ENCODE measurements at regions of chr12 and their contacts with region 1.

Region 1: GRCh38 chr12:12319451-12320183 is 30.4 kb downstream of the MANSC1 start:
- DNase-seq: no peak
- H3K4me3 ChIP-seq: no peak overlapping the region
- H3K27ac ChIP-seq: no peak overlapping the region
- H3K4me1 ChIP-seq: no peaks in the 10 kb centered on the region
- H3K27me3 ChIP-seq: no peaks in the 10 kb centered on the region
- CTCF ChIP-seq: no peak

Region 2: DNA sequence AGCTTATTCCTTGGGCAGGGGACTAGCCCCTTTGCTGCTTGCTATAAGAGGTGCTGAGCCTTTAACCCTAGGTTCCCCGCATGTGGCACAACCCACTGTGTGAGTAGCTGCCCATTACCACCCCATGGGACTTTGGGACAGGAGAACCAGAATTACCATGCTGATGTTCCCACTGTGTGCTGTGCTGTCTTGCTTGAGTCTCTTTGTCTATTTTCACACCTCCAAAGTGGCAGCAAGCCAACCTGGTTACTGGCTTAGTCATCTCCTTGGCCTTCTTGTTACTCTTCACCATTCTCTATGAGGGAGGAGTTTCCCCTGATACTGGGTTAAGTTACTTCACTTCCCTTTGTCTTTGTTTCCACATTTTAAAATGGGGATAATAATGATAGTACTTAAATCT is 743.5 kb before region 1 on chr12:
- CTCF ChIA-PET with region 1: no interaction called
- dilution Hi-C with region 1: no loop called
- in situ Hi-C with region 1: no loop called
- intact Hi-C with region 1: no loop called
- DNase-seq: peak; percentile 94
- H3K4me3 ChIP-seq: no peak overlapping the region
- H3K27ac ChIP-seq: peak overlapping the region; percentile 53
- H3K4me1 ChIP-seq: peaks cover 29% of the 10 kb centered on the region
- H3K27me3 ChIP-seq: no peaks in the 10 kb centered on the region
- CTCF ChIP-seq: no peak

Region 3: DNA sequence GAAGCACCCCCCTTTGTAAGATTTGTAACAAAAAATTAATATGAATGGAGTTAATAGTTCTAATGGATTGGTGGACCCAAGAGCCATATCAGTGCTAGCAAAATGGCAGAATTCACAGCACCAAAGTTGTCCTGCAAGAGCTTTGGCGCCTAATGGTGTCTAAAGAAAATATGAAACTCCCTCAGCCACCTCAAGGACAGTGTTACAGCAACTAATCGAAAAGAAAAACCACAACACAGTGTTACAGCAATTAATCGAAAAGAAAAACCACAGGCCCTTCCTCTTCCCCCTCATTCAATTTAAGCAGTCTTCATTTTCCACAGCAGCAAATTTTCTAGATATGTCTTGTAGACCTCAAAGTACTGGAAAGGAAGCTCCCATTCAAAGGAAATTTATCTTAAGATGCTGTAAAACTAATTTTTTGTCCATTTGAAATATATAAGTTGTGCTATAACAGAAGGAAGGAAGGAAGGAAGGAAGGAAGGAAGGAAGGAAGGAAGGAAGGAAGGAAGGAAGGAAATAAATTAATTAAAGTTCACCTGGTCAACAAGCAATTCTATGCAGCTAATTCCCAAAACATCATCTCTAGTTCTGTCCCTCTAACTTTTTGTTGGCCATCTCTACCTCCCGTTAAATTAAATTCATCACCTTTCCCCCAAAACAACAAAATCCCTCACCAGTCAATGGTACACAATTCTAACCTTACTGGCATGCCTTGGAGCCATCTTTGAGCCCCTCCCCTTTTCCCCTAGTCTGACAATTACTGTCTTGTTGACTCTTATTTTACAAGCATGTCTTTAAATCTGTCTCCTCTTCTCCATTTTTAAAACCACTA is 70.2 kb before region 1 on chr12:
- CTCF ChIA-PET with region 1: no interaction called
- dilution Hi-C with region 1: no loop called
- in situ Hi-C with region 1: loop called in 1 of 2 experiments (anchors 10 kb)
- intact Hi-C with region 1: no loop called
- DNase-seq: no peak
- H3K4me3 ChIP-seq: no peak overlapping the region
- H3K27ac ChIP-seq: no peak overlapping the region
- H3K4me1 ChIP-seq: no peaks in the 10 kb centered on the region
- H3K27me3 ChIP-seq: no peaks in the 10 kb centered on the region
- CTCF ChIP-seq: no peak

Region 4: DNA sequence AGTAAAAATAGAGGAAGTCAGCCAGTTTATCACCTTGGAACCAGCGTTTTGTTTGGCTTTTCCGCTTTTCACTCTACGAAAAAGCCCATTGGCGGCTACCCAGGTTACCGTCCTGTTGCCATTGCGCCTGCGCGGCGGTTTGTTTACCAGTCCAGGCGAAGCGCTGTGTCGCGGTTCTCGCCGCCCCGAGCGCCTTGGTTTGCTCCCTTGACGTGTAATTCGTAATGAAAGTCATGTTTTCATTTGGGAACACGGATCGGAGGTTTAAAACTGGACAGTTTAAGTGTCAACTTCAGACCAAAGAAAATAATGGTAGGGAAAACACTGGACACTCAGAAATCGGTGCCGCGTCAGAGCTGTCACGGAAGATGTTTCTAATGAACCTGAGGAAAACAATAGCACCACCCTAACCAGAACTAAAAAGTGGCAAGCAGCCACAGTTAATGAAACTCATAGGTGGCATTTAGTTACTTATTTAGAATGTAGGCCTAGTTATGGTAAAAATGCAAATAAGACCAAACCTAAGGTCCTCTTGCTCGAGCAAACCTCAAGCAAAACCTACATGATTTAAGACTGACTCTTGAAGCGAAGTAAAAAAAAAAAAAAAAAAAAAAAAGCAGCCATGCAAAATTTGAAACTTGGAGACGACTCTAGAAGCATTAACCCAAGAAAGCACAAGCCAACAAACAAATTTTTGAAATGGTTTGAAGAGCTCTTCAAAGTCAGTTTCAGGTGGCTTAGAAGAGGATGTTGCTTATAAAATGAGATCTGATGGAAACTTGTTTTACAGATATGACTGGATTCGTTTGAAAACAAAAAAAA is 377.2 kb after region 1 on chr12:
- CTCF ChIA-PET with region 1: no interaction called
- dilution Hi-C with region 1: no loop called
- in situ Hi-C with region 1: no loop called
- intact Hi-C with region 1: no loop called
- DNase-seq: peak; percentile 78
- H3K4me3 ChIP-seq: peak overlapping the region; percentile 55 to 90 (median 59)
- H3K27ac ChIP-seq: peak overlapping the region; percentile 96
- H3K4me1 ChIP-seq: peaks cover 8% of the 10 kb centered on the region
- H3K27me3 ChIP-seq: no peaks in the 10 kb centered on the region
- CTCF ChIP-seq: no peak

Measured in mammary epithelial cell (primary cell).